ENCODE measurements at regions of chr11 and their contacts with region 1.

Region 1: DNA sequence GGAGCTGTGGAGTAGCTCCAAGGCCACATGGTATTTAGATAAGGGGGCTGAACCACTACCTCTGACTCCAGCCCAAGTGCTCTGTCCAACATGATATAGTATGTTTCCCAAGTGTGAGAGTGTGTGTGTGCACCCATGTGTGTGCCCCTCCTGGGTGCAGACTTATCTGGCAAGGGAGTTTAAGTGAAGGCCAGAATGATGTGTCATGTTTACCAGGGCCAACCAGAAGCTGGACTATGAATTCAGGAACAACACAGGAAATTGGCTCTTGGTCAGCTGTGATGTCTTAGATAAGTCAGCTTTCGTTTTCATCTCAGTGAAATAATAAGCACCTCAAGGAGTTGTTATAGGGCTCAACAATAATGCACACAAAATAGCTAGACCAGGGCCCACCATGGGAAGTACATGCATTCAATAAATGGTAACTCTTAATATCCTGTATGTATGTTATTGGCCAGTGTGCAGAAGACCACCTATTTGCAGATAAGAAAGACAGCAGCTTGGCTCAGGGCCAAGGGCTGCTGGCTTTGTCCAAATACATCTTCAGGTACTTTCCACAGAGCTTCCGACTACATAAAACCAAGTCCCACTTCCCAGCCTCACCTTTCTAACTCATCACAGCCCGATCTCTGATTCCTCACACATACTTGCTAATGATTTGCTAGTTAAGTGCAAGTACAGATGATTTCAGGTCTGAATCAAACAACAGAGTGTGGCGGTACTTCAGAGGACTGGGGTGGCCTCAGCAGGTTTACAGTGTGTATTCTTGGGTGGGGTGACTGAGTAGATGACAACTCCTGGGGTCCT is 120.9 kb downstream of the ME3 start:
- DNase-seq: no peak

Region 2: GRCh38 chr11:86469491-86470393 is 81.7 kb before region 1 on chr11:
- intact Hi-C with region 1: no loop called
- DNase-seq: peak; percentile 88

Region 3: DNA sequence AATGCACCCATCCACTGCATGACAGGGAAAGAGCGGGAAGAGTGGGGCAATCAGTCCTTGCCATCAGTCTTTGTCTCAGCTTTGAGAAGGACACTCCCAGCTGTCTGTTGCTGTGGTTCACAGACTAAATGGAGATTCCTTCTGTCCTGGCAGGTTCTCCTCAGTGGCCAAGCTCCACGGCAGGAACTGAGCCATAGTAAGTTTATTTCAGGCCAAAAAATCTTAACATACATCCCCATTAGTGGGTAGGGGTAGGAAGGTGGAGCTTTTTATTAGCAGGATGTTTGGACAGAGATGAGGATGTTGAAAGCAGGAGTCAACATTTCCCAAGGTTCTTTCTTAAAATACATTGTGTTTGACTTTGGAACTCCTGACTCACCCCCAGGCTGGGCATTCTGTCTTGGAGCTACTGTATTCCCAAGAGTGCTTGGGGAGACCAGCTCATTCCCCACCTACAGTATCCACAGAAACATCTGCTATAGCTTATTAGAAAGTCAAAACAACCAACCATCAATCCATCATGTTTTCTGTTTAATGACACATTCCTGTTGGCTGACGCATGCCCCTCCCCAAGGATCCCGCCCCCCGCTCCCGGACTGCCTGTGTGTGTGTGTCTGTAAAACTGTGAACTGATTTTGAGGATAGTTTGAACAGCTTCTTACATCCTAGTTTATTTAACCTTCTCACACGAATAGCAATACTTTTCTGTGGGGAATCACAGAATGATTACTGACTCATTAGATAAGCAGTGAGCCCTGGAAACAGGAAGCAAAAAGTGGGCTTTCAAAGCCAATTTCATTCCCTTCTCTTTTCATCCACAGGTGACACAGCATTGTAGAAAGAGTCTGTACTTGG is 67.3 kb before region 1 on chr11:
- intact Hi-C with region 1: loop called in 1 of 2 experiments (anchors 10 kb)
- DNase-seq: peak; percentile 90

Region 4: GRCh38 chr11:87125257-87125656 is 573.8 kb after region 1 on chr11:
- intact Hi-C with region 1: no loop called
- DNase-seq: no peak

Measured in posterior vena cava (tissue), 2 donors.